Caco-2 (cell line): ENCODE measurements at regions of chr9 and their contacts with region 1.

Region 1: GRCh38 chr9:124868511-124869465 is 6.9 kb downstream of the ARPC5L start:
- DNase-seq: peak; percentile 90 to 93
- H3K4me3 ChIP-seq: peak overlapping the region; percentile 99
- H3K4me3 Mint-ChIP-seq: peak overlapping the region; percentile 75
- H3K27ac Mint-ChIP-seq: peak overlapping the region; percentile 77
- H3K4me1 ChIP-seq: peaks cover 10% of the 10 kb centered on the region
- H3K4me1 Mint-ChIP-seq: peaks cover 28% of the 10 kb centered on the region
- H3K27me3 ChIP-seq: no peaks in the 10 kb centered on the region
- H3K27me3 Mint-ChIP-seq: no peaks in the 10 kb centered on the region
- CTCF ChIP-seq: peak in 1 of 2 experiments; percentile 29

Region 2: DNA sequence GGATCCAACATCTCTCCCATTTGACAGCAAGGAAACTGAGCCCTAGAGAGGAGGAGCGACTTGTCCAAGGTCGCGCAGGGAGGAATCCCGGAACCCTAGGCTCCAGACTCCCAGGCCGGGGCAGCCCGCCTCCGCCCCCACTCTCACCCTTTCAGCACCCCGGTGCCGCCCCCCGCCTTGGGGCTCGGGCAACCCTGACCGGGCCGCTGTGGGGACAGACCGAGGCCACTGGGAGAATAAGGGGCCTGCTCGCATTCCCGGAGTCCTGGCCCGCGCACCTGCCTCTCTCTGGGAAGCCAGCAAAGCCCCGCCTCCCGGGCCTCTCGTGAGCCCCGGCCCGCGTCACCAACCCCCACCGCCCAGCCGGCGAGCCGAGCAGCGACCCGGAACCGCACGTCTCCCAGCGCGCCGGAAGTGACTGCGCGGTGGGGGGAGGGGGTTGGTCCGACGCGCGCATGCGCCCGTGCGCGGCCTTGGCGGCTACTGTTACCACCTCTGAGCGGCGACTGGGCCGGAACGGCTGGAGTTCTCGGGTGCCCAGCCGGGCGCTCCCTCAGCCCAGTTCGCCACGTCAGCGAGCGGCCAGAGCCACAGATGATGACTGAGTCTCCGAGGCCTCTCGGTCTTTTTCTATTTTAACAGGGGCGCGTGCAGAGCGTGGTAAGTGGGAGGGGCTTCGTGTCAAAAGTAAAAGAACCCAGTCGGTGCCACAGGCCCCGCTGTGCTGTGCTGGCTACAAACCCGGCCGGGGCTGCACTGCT is 72.1 kb after region 1 on chr9 and contains the start of gene GOLGA1:
- CTCF ChIA-PET with region 1: interaction called, 3 read pairs
- POLR2A ChIA-PET with region 1: no interaction called
- intact Hi-C with region 1: loop called (anchors 2 kb)
- DNase-seq: peak; percentile 97 to 98
- H3K4me3 ChIP-seq: peak within 1 kb of the TSS; percentile 74
- H3K4me3 Mint-ChIP-seq: peak within 1 kb of the TSS; percentile 95
- H3K27ac Mint-ChIP-seq: peak within 1 kb of the TSS; percentile 95
- H3K4me1 ChIP-seq: peaks cover 5% of the 10 kb centered on the region; the same call in 1 of the 2 replicates
- H3K4me1 Mint-ChIP-seq: no peaks in the 10 kb centered on the region
- H3K27me3 ChIP-seq: no peaks in the 10 kb centered on the region
- H3K27me3 Mint-ChIP-seq: no peaks in the 10 kb centered on the region
- CTCF ChIP-seq: no peak
- total RNA-seq, gene GOLGA1: 18.7 and 18.9 TPM in 2 replicates